ENCODE measurements at regions of chr6 and their contacts with region 1.

Region 1: GRCh38 chr6:73129653-73130443 is 95.4 kb downstream of the KHDC1L start:
- DNase-seq: peak; percentile 28 to 94 (median 82)

Region 2: DNA sequence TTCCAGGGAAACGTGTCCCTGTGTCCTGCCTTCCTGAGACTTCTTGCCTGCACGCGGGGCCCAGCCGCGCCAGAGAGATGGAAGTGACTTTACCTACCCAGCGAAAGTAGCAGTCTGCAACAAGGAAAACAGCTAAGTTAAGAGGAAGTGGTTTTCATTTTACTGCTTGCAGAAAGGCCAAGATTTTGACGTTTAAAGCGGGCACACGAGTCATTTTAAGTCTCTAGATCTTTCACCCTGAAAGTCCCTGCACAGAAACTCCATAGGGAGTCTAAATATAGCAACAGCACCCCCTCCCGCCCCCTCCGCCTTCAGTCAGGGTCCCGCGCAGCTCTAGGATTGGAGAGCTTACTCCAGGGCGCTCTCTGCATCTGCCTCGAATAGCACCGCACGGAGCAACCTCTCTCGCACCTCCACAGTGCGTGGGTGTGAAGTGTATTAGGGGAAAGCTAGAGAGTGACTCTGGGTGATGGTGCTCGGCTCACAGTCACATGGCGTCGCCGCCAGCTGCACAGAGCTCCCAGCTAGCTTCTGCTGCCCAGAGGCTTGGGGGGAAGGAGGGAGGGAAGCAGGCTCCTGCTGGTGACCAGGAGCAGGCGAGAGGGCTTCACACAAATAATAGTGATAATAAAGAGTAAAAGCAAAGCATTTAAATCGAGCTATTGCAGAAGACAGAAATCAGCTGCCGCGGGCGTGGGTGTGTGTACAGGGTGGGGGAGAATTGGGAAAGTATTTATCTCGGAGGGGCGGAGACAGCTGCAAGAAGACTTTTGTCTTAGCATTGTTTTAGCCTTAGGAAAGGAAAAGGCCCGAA is 509.8 kb before region 1 on chr6:
- intact Hi-C with region 1: loop called (anchors 10 kb)
- DNase-seq: peak; percentile 74 to 97 (median 88)

Measured in head of caudate nucleus (tissue), 42 donors.